K562 (cell line): ENCODE measurements at regions of chr4 and their contacts with region 1.

Region 1: DNA sequence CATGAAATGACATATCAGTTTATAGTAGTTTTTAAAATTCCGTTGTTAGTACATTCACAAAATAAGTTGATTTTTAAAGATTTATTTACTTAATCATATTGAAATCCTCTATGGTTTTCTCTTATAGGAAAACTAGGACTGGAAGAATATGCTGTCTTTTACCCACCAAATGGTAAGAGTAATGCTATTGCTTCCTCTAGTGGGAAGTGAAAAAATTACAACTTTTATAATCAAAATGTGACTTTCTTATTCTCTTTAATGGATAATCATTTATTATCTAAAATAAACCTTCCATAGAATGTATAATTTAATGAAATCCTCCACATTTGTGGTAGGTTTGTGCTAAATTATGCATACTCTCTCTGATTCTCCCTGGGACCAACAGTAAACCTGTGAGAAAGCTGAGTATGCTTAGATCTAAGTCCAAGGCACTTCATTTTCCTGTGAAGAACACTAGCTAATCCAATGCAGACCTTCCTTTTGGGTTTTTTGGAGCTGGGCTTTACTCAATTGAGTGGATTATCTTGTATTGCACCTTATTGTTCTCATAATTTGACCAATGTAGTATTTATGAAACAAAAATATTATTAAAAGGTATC is 136.2 kb downstream of the TBC1D19 start:
- DNase-seq: peak in 3 of 4 experiments; percentile 10 to 21 (median 17)
- ATAC-seq: peak; percentile 58; the same call in 1 of the 3 replicates
- H3K4me3 ChIP-seq: no peak overlapping the region
- H3K27ac ChIP-seq: no peak overlapping the region
- H3K4me1 ChIP-seq: no peaks in the 10 kb centered on the region
- H3K27me3 ChIP-seq: no peaks in the 10 kb centered on the region
- CTCF ChIP-seq: peak in 2 of 3 experiments; percentile 50 to 93; a peak in 4 of 6 replicates
- EP300 ChIP-seq: no peak
- POLR2A ChIP-seq: no peak
- RAD21 ChIP-seq: peak; percentile 94 to 98

Region 2: GRCh38 chr4:26320538-26321325 is 399.3 kb before region 1 on chr4 and contains the start of gene RBPJ:
- CTCF ChIA-PET with region 1: no interaction called
- POLR2A ChIA-PET with region 1: no interaction called
- in situ Hi-C with region 1: no loop called
- intact Hi-C with region 1: loop called (anchors 5 kb)
- DNase-seq: peak; percentile 85 to 92 (median 86)
- ATAC-seq: peak; percentile 73
- H3K4me3 ChIP-seq: peak within 1 kb of the TSS; percentile 82
- H3K27ac ChIP-seq: peak within 1 kb of the TSS; percentile 73
- H3K4me1 ChIP-seq: peaks cover 16 to 23% of the 10 kb centered on the region in 2 experiments
- H3K27me3 ChIP-seq: no peaks in the 10 kb centered on the region
- CTCF ChIP-seq: peak in 1 of 3 experiments; percentile 2; a peak in 1 of 6 replicates
- EP300 ChIP-seq: no peak
- POLR2A ChIP-seq: peak; percentile 82
- RAD21 ChIP-seq: no peak
- polyA plus RNA-seq, gene RBPJ: 23.1 to 42.0 TPM

Region 3: DNA sequence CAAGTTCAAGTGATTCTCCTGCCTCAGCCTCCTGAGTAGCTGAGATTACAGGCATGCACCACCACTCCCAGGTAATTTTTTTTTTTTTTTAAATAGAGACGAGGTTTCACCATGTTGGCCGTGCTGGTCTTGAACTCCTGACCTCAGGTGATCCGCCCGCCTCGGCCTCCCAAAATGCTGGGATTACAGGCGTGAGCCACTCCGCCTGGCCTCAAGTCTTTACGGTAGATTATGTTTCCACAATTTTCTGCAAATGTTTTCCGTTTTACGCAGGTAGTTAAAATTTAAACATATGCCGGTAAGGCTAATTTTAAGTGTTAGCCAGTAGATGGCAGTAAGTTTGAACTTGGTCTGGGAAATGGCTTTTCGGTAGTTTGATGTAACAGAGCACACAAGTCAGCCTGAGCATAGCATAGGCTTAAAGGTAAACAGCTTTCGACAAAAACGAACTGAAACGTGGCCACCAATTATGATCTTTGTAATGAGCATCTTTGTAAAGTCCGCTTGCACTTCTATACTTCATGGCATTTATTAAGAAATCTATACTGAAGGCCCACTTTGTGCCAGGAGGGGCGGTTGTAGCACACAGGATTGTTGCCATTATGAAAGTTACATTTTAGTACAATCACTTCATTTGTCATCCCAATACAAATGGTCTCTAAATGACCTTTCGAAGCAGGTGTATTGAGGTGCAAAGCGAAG is 260.8 kb before region 1 on chr4:
- CTCF ChIA-PET with region 1: interaction called, 11 read pairs
- POLR2A ChIA-PET with region 1: no interaction called
- in situ Hi-C with region 1: no loop called
- intact Hi-C with region 1: loop called (anchors 1 kb)
- DNase-seq: peak; percentile 40 to 53 (median 48)
- ATAC-seq: peak; percentile 84
- H3K4me3 ChIP-seq: no peak overlapping the region
- H3K27ac ChIP-seq: no peak overlapping the region
- H3K4me1 ChIP-seq: no peaks in the 10 kb centered on the region
- H3K27me3 ChIP-seq: peaks cover 4 to 16% of the 10 kb centered on the region in 2 experiments; a peak in 4 of 5 replicates
- CTCF ChIP-seq: peak; percentile 38 to 68 (median 61); a peak in 5 of 6 replicates
- EP300 ChIP-seq: no peak
- POLR2A ChIP-seq: no peak
- RAD21 ChIP-seq: peak; percentile 77 to 81

Region 4: GRCh38 chr4:26473893-26474292 is 246.2 kb before region 1 on chr4:
- CTCF ChIA-PET with region 1: interaction called, 14 read pairs
- POLR2A ChIA-PET with region 1: no interaction called
- in situ Hi-C with region 1: no loop called
- intact Hi-C with region 1: loop called (anchors 5 kb)
- DNase-seq: peak in 1 of 4 experiments; percentile 20
- ATAC-seq: peak; percentile 35; the same call in 1 of the 3 replicates
- H3K4me3 ChIP-seq: no peak overlapping the region
- H3K27ac ChIP-seq: no peak overlapping the region
- H3K4me1 ChIP-seq: no peaks in the 10 kb centered on the region
- H3K27me3 ChIP-seq: peaks cover 13 to 25% of the 10 kb centered on the region in 2 experiments
- CTCF ChIP-seq: peak in 2 of 3 experiments; percentile 13 to 37; a peak in 2 of 6 replicates
- EP300 ChIP-seq: no peak
- POLR2A ChIP-seq: no peak
- RAD21 ChIP-seq: peak; percentile 42 to 58